ENCODE measurements at regions of chr1 and their contacts with region 1.

Region 1: GRCh38 chr1:153967082-153968000 is at the start of gene CREB3L4:
- DNase-seq: peak; percentile 62 to 97 (median 81)
- ATAC-seq: peak; percentile 84
- H3K4me3 ChIP-seq: peak within 1 kb of the TSS; percentile 77 to 79
- H3K4me3 Mint-ChIP-seq: peak within 1 kb of the TSS; percentile 86
- H3K27ac ChIP-seq: peak within 1 kb of the TSS; percentile 66 to 78
- H3K27ac Mint-ChIP-seq: peak within 1 kb of the TSS; percentile 95
- H3K4me1 ChIP-seq: peaks cover 41% of the 10 kb centered on the region
- H3K4me1 Mint-ChIP-seq: peaks cover 51% of the 10 kb centered on the region
- H3K27me3 ChIP-seq: no peaks in the 10 kb centered on the region
- H3K27me3 Mint-ChIP-seq: no peaks in the 10 kb centered on the region
- CTCF ChIP-seq: peak; percentile 15
- total RNA-seq, gene CREB3L4: 3.0 to 3.7 TPM

Region 2: GRCh38 chr1:153805042-153805745 is 162.1 kb before region 1 on chr1:
- CTCF ChIA-PET with region 1: interaction called, 3 read pairs
- POLR2A ChIA-PET with region 1: interaction called, 11 read pairs
- intact Hi-C with region 1: no loop called
- DNase-seq: peak; percentile 37 to 96 (median 72)
- ATAC-seq: peak; percentile 97
- H3K4me3 ChIP-seq: no peak overlapping the region
- H3K4me3 Mint-ChIP-seq: peak overlapping the region; percentile 30
- H3K27ac ChIP-seq: peak overlapping the region; percentile 56 to 76
- H3K27ac Mint-ChIP-seq: peak overlapping the region; percentile 87
- H3K4me1 ChIP-seq: peaks cover 29% of the 10 kb centered on the region
- H3K4me1 Mint-ChIP-seq: peaks cover 30% of the 10 kb centered on the region
- H3K27me3 ChIP-seq: no peaks in the 10 kb centered on the region
- H3K27me3 Mint-ChIP-seq: no peaks in the 10 kb centered on the region
- CTCF ChIP-seq: no peak

Region 3: GRCh38 chr1:153977250-153978240 is 10.2 kb after region 1 on chr1 and contains the start of gene JTB:
- CTCF ChIA-PET with region 1: interaction called, 33 read pairs
- POLR2A ChIA-PET with region 1: interaction called, 52 read pairs
- intact Hi-C with region 1: loop called (anchors 1 kb)
- DNase-seq: peak; percentile 62 to 91 (median 86)
- ATAC-seq: peak; percentile 95
- H3K4me3 ChIP-seq: peak within 1 kb of the TSS; percentile 92 to 97
- H3K4me3 Mint-ChIP-seq: peak within 1 kb of the TSS; percentile 97
- H3K27ac ChIP-seq: peak within 1 kb of the TSS; percentile 74 to 77
- H3K27ac Mint-ChIP-seq: peak within 1 kb of the TSS; percentile 96
- H3K4me1 ChIP-seq: peaks cover 20% of the 10 kb centered on the region
- H3K4me1 Mint-ChIP-seq: peaks cover 35% of the 10 kb centered on the region
- H3K27me3 ChIP-seq: no peaks in the 10 kb centered on the region
- H3K27me3 Mint-ChIP-seq: no peaks in the 10 kb centered on the region
- CTCF ChIP-seq: no peak
- total RNA-seq, gene JTB: 90.4 to 91.1 TPM

Measured in CD8-positive, alpha-beta T cell (primary cell).